ENCODE measurements at regions of chr18 and their contacts with region 1.

Region 1: DNA sequence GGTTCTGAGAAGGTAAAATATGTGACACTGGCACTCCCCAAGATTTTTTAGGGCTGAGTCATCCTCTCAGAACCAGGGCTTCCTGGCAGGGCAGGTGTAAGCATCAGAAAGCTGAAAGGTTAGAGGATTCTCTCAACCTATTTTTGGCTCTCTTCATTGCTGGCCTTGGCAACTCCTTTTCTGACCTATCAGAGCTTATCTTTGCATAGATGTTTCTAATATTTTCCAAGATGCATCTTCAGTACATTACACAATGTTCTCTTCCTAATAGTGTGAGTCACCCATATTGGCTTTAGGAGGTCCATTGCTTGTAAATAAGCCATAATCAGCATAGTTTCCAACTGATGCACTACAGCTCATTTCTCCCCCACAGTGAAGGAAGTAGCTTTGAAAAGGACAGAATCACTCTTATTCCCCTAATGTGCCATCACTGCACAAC is 2008.4 kb upstream of the PIK3C3 start:
- DNase-seq: peak; percentile 81
- ATAC-seq: peak; percentile 88
- H3K4me3 ChIP-seq: no peak overlapping the region
- H3K27ac ChIP-seq: peak overlapping the region; percentile 70
- H3K4me1 ChIP-seq: peaks cover 32% of the 10 kb centered on the region
- H3K27me3 ChIP-seq: no peaks in the 10 kb centered on the region
- CTCF ChIP-seq: no peak

Region 2: DNA sequence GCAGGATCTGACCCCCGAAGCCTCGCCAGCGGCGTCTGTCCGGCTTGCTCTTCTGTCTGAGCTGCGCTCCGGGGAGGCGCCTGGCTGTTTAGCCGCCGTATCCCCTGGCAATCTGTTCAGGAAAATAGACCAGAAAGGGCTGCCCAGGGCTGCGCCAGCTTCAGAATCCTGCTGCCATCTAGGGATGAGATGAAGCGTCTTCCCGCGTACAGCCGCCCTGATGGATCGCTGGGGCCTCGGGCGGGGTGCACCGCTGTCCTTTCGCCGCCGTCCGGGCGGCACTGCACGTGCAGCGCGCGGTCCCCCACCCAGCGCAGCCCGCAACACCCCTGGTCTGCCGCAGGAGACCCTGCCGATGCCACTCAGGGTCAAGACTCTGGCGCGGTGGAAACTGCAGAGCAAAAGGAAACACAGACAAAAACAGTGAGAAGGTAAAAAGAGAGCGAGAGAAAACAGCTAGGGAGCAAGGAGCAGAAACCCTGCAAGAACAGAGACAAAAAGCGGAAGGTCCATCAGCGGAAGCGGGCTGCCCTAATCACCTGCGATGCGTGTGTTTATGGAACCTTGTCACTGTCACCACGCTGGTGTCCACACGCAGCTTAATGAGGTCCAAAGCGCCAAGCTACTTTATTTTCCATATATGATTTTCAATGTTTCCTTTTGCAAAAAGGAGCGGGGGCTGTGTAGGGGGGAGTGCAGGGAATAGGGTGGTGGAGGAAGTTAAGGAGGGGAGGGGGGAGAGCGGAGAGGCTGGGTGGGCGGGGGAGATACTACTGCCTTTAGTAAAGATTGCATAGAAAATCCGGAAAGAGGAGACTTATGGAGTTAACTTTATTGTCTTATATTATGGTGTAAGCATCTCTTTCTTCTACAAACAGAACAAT is 104.9 kb before region 1 on chr18:
- CTCF ChIA-PET with region 1: no interaction called
- POLR2A ChIA-PET with region 1: no interaction called
- intact Hi-C with region 1: loop called (anchors 5 kb)
- DNase-seq: peak; percentile 35
- ATAC-seq: peak; percentile 96
- H3K4me3 ChIP-seq: peak overlapping the region; percentile 73
- H3K27ac ChIP-seq: no peak overlapping the region
- H3K4me1 ChIP-seq: no peaks in the 10 kb centered on the region
- H3K27me3 ChIP-seq: no peaks in the 10 kb centered on the region
- CTCF ChIP-seq: peak; percentile 36; the same call in 1 of the 2 replicates

Region 3: DNA sequence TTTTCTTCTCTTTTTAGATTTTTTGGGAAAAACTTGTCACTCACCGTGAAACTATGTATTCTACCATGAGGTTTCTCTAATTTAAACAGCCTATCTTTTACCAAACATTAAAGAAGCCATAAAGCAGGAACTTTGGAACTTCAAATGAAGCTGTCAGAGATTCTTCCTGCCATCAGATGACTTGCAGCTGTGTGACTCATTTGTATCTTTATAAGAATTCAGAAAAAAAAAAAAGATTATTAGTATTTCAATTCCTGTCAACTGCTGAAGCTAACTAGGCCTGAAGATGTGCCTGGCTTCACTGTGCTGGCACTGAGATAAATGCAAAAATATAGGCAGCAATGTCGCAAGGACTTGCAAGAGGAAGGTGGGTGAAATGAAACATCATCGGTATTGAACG is 609.3 kb after region 1 on chr18:
- CTCF ChIA-PET with region 1: no interaction called
- POLR2A ChIA-PET with region 1: interaction called, 15 read pairs
- intact Hi-C with region 1: no loop called
- DNase-seq: no peak
- ATAC-seq: peak; percentile 40; the same call in 1 of the 2 replicates
- H3K4me3 ChIP-seq: no peak overlapping the region
- H3K27ac ChIP-seq: no peak overlapping the region
- H3K4me1 ChIP-seq: no peaks in the 10 kb centered on the region
- H3K27me3 ChIP-seq: no peaks in the 10 kb centered on the region
- CTCF ChIP-seq: no peak

Measured in PC-3 (cell line).